ENCODE measurements at regions of chr3 and their contacts with region 1.

Region 1: DNA sequence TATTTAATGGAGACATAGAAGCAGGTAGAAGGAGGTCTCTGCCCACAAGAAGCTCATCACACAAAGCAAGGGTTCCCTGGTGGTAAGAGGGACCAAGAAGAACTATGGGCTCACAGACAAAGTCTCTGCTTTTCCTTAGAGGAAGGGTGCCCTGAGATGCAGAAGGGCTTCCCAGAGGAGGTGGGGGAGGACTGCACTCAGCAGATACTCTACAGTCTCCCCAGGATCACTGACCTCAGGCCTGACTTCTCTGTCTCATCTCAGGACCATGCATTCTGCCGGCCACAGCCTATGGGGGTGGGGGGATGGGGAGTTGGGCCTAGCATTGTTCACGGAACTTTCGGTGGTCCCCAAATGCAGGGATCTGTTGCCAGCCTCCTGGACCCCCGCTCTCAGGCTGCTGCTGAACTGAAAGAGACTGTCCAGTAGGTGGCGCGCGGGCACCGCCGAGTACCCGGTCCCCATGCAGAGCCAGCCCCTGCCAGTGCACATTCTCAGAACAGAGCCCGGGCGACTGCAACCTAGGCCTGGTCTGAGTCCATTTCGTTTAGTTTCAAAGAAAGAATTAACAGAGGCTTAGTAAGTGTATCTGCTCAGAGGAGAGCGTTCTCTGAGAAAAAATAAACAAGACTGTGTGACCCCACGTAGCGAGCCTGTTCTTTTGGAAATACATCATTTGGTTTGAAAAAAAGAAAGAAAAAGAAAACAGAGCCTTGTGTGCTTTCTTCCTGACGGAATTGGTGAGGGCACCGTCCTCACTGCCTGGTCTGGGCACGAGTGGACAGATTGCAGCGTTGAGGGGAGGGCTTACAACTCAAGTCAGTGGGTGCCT is 74.1 kb downstream of the LRTM1 start:
- DNase-seq: peak; percentile 93

Region 2: GRCh38 chr3:54427941-54428871 is 425.6 kb before region 1 on chr3:
- intact Hi-C with region 1: loop called in 1 of 2 experiments (anchors 5 kb)
- DNase-seq: no peak

Region 3: DNA sequence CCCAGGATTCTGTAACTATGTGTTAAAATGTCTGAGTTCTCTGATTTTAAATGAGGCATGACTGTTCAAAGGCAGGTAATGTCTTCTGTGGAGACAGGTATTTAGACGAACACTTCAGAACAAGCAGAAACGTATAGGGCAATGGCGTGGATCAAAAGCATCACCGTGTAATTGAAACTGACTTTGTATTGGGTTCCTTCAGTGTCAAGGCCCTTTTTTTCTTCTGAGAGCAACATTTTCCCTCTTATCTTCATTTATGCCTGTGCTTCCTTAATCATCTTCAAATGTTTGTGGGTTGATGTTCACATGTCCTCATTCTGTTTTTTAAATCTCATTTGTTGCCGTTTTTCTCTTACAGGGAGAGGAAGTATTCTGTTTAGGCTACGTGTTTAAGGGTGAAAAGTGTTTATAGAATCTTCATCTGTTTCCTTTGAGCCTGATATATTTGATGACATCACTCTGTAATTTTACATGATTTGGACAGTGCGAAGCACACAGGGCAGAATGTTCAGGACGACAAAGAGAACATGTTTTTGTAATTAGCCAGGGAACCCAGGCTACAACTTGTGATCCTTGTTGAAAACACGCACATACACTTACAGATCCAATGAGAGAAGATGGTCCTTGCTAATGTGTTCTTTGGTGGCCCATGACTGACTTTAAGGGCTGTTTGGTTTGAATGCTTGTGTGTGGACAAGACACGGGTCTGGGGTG is 121.9 kb before region 1 on chr3:
- intact Hi-C with region 1: no loop called
- DNase-seq: no peak

Region 4: DNA sequence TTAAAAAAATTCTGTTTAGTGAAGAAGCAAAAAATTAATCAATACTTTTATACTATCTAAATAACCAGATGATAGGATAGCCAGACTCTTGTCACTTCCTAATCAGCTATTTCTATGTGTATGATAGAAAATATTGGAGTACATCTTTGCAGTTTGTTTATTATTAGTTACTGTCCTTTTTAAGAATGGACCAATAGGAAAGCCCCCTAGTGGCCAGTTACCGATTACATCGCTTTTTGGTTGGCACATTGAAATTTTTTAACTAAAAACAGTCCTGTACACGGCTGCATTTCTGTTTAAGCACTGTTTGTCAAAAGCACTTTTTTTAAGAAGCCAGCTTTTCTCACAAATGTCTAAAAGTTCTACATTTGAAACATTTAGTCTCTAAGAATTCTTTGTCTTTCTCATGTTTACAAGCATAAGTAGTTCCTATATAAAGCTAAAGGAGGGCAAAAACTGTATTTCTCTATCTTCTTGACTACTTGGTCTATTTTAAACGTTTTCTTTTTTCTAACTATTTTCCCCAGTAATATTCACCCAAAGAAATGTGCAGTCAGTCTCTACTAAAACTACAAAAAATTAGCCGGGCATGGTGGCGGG is 327.2 kb after region 1 on chr3:
- intact Hi-C with region 1: loop called in 1 of 2 experiments (anchors 10 kb)
- DNase-seq: no peak

Measured in posterior vena cava (tissue), 2 donors.